ENCODE measurements at regions of chr10 and their contacts with region 1.

Region 1: GRCh38 chr10:14995964-14996565 is 36.9 kb downstream of the MEIG1 start:
- DNase-seq: no peak
- H3K4me3 ChIP-seq: no peak overlapping the region
- H3K4me3 Mint-ChIP-seq: no peak overlapping the region
- H3K27ac Mint-ChIP-seq: no peak overlapping the region
- H3K4me1 ChIP-seq: peaks cover 28% of the 10 kb centered on the region
- H3K4me1 Mint-ChIP-seq: peaks cover 35% of the 10 kb centered on the region
- H3K27me3 ChIP-seq: no peaks in the 10 kb centered on the region
- H3K27me3 Mint-ChIP-seq: no peaks in the 10 kb centered on the region
- CTCF ChIP-seq: no peak

Region 2: GRCh38 chr10:13016426-13016825 is 1979.6 kb before region 1 on chr10:
- CTCF ChIA-PET with region 1: no interaction called
- POLR2A ChIA-PET with region 1: no interaction called
- intact Hi-C with region 1: loop called (anchors 10 kb)
- DNase-seq: peak; percentile 20 to 55
- H3K4me3 ChIP-seq: no peak overlapping the region
- H3K4me3 Mint-ChIP-seq: no peak overlapping the region
- H3K27ac Mint-ChIP-seq: no peak overlapping the region
- H3K4me1 ChIP-seq: peaks cover 26% of the 10 kb centered on the region
- H3K4me1 Mint-ChIP-seq: peaks cover 23% of the 10 kb centered on the region
- H3K27me3 ChIP-seq: no peaks in the 10 kb centered on the region
- H3K27me3 Mint-ChIP-seq: peaks cover 4% of the 10 kb centered on the region
- CTCF ChIP-seq: no peak

Region 3: DNA sequence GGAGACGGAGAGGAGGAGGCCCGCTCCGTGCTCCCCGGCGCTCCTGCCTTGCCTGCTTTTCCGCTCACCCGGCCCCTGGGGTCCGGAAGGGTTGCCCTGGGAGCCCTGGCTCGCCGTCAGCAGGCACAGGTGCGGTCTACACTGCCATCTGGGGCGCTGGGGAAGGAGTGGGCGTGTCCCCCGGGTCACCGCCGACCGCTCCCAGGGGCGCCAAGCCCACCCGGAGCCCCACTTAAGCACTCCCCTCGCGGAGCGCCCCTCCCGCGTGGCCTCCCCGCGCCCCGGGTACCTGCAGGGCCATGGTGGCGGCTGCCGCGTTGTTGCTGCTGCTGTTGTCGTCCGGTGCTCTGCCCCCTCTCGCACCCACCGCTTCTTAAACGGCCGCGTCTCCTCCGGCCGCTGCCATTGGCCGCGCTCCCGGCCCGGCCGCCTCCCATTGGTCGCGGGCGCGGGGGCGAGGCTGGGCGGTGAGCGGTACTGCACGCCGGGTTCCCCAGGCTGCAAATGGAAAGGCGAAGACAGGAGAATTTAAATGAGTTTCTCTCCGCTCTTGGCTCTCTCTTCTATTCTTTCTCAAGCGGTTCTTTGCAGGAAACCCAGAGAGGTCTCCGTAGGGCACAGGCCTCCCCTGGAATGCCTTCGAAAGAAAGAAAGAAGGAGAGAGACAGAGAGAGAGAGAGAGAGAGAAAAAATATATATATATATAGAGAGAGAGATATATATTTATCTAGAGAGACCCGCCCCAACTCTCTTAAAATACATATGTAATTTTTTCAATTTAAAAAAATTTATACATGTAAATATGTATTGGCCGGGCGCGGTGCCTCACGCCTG is 92.6 kb after region 1 on chr10 and contains the start of gene ACBD7:
- CTCF ChIA-PET with region 1: no interaction called
- POLR2A ChIA-PET with region 1: no interaction called
- intact Hi-C with region 1: loop called (anchors 5 kb)
- DNase-seq: peak; percentile 87 to 95
- H3K4me3 ChIP-seq: peak within 1 kb of the TSS; percentile 94
- H3K4me3 Mint-ChIP-seq: peak within 1 kb of the TSS; percentile 85
- H3K27ac Mint-ChIP-seq: no peak within 1 kb of the TSS
- H3K4me1 ChIP-seq: peaks cover 5% of the 10 kb centered on the region
- H3K4me1 Mint-ChIP-seq: peaks cover 5% of the 10 kb centered on the region
- H3K27me3 ChIP-seq: no peaks in the 10 kb centered on the region
- H3K27me3 Mint-ChIP-seq: peaks cover 9% of the 10 kb centered on the region
- CTCF ChIP-seq: peak; percentile 13 to 39
- total RNA-seq, gene ACBD7: 9.7 and 13.9 TPM in 2 replicates

Region 4: GRCh38 chr10:15106352-15107013 is 110.4 kb after region 1 on chr10:
- CTCF ChIA-PET with region 1: interaction called, 3 read pairs
- POLR2A ChIA-PET with region 1: no interaction called
- intact Hi-C with region 1: loop called (anchors 1 kb)
- DNase-seq: peak; percentile 83 to 88
- H3K4me3 ChIP-seq: no peak overlapping the region
- H3K4me3 Mint-ChIP-seq: no peak overlapping the region
- H3K27ac Mint-ChIP-seq: no peak overlapping the region
- H3K4me1 ChIP-seq: 0 out of 2 replicates have a peak, but pooled peaks cover 7% of the 10 kb centered on the region
- H3K4me1 Mint-ChIP-seq: no peaks in the 10 kb centered on the region
- H3K27me3 ChIP-seq: no peaks in the 10 kb centered on the region
- H3K27me3 Mint-ChIP-seq: no peaks in the 10 kb centered on the region
- CTCF ChIP-seq: peak; percentile 94 to 97